ENCODE measurements at regions of chr9 and their contacts with region 1.

Region 1: DNA sequence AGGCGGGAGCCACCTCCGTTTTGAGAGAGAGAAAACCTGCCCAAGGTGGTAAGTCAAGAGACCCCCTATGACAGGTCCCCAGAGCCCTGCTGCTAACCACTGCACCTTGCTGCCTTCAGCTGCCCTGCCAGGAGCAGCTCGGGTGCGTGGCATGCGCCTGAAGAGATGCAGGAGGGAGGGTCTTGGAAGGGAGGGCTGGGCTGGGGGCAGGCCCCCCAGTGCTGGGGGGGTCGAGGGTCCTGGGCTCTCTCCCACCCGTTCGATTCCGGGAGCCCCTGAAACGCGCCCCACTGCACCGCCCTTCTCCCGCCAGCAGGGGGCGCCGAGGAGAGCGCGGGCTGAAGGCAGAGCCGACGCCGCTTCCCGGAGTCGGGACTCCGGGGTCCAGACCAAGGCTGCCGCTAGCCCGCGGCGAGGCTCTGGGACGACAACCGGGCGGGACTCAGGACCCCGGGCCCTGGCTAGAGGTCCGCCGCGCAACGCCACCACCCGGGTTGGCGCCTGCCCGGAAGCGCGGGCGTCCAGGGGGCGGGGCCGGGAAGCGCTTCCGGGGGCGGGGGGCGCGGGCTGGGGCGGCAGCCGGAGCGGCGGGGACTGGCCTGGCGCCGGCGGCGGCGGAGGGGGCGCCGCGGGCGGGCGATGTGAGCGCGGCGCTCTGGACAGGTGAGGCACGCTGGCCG is at the start of gene ZBTB34:
- DNase-seq: peak; percentile 42 to 95 (median 65)

Region 2: GRCh38 chr9:126347911-126348760 is 512.1 kb before region 1 on chr9:
- intact Hi-C with region 1: no loop called
- DNase-seq: peak in 1 of 10 donors; percentile 74

Region 3: DNA sequence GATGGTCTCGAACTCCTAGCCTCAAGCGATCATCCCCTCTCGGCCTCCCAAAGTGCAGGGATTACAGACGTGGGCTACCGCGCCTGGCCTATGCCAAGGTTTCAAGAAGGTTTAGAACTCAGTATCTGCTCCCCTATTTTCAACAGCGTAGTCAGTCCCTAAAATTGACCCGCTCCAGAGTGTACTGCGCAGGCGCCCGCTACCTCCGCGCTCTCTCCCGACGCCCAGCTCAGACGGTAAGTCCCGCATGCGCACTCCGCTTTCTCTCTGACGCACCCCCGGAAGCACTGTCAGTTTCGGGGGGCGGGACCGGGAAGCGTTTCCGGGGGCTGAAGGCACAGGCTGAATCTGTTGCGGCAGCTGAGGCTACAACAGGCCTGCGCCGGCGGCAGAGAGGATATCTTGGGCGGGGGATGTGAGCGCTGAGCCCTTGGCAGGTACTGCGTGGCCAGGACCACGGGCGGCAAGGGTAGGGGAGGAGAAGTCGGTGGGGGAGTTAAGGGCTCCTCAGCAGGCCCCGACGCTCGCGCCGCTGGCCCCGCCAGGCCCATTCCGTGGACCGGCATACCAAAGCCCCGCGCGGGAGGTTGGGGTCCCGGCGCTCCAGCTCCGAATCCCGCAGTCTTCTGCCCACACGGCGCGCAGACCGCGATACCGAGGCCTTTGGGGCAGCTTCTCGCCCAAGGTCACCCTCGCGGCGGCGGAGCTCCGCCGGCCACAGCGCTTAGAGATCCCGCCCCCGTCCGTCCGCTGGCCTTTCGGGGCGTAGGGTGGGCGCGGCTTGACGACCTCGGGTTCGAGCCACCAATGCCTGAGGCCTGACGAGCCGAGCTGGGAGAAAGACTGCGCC is 55.3 kb before region 1 on chr9 and contains the start of gene ZBTB43:
- intact Hi-C with region 1: loop called (anchors 2 kb)
- DNase-seq: peak; percentile 91 to 99 (median 95)

Region 4: DNA sequence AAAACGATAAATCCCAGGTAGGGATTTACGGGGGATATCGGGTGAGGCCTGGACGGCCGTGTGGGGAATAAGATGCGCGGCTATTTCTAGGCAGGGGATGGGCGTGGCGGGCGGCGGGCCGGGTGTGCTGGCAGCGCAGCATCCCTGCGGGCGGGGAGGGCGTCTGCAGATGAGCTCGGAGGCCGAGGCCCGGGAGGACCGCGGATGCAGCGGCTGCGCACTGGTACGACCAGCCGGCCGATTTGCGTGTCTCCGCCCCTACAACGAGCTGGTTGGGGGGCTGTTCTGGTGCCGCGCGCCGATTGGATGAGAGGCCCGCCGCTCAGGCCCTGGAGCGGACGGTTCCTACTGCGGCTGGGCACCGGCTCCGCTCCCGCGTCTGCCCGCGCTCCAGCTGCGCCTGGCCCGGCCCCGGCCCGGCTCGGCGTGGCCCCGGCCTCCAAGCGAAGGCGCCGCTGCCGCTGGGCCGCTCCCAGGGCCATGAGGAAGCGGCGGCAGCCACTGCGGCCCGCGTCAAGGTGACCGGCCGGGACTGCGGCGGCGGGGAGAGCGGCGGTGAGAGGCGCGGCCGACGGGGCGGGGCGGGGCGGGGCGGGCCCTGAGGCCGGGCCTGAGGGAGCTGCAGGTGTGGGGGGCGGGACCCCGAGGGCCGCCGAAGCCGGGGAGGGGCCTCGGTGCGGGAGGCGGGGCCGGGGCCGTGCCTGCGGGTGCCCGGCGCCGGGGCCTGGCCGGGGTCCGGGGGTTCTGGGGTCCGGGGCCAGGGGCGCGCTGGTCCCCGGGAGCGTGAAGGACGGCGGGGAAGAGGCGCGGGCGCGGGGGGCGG is 54.5 kb after region 1 on chr9 and contains the start of gene RALGPS1:
- intact Hi-C with region 1: loop called (anchors 1 kb)
- DNase-seq: peak; percentile 95 to 100 (median 97)

Region 5: DNA sequence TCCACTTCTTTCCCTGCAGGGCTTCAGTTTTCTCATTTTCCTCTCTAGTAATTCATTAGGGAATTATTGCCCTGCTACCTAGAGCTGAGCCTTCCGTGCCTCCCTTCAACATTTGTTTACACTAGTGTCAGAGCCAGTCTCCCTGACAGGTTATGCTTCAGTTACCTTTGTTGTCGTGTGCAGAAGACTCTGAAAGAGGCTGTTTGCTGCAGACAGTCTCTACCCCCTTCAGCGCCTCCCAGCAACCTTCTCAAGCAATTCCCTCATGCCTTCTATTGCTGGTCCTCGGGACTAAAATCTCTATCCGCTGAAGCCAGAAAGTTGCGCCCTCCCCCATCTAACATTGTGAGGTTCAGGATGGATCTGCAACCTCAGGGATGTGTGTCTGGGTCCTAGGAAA is 67.2 kb after region 1 on chr9:
- intact Hi-C with region 1: no loop called
- DNase-seq: no peak